HepG2 (cell line): ENCODE measurements at regions of chr3 and their contacts with region 1.

Region 1: DNA sequence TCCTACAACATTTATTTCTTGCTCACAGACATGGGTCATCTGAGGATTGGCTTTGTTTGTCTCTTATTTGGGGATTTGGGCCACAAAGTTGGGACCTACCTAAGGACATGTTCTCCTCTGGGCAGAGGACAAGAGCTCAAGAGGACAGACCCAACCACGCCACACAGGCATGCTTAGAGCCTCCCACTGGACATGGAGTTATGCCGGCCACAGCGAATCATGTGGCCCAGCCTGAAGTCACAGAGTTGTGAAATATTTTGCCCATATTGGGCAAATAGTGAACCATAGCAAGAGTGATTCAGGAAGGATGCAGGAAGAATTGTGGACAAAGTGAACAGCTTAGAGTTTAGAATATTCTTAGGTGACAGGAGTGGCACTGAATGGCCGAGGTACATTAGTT is 9.9 kb downstream of the TRAK1 start:
- DNase-seq: peak; percentile 51
- ATAC-seq: peak; percentile 39
- H3K4me3 ChIP-seq: no peak overlapping the region
- H3K27ac ChIP-seq: peak overlapping the region; percentile 3
- H3K4me1 ChIP-seq: peaks cover 29% of the 10 kb centered on the region
- H3K27me3 ChIP-seq: no peaks in the 10 kb centered on the region
- CTCF ChIP-seq: no peak
- EP300 ChIP-seq: no peak
- POLR2A ChIP-seq: no peak
- RAD21 ChIP-seq: no peak

Region 2: DNA sequence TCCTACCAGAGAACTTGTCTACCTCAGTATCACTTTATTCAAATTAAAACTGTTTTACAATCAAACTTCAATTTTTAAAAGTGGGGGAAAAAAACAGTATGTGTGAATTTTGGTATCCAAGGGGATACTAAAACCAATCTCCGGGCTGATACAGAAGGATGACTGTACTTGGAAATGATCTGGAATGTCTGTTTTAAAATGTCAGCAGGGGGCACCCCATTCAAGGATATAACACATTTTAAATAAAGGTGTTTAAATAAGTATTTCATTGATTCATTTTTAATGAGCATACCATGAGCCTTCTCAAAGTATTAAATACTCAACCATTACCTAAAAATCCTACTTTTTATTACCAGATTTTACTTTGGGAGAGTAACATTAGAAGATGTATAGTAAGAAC is 207.1 kb before region 1 on chr3:
- CTCF ChIA-PET with region 1: interaction called, 24 read pairs
- POLR2A ChIA-PET with region 1: no interaction called
- in situ Hi-C with region 1: loop called (anchors 5 kb)
- intact Hi-C with region 1: loop called (anchors 1 kb)
- DNase-seq: peak; percentile 30
- ATAC-seq: no peak
- H3K4me3 ChIP-seq: no peak overlapping the region
- H3K27ac ChIP-seq: no peak overlapping the region
- H3K4me1 ChIP-seq: peaks cover 12% of the 10 kb centered on the region
- H3K27me3 ChIP-seq: no peaks in the 10 kb centered on the region
- CTCF ChIP-seq: peak; percentile 62
- EP300 ChIP-seq: no peak
- POLR2A ChIP-seq: no peak
- RAD21 ChIP-seq: 0 out of 2 replicates have a peak, but pooled peaks have one; percentile 25

Region 3: GRCh38 chr3:41961750-41962679 is 139.0 kb before region 1 on chr3 and contains the start of gene ULK4:
- CTCF ChIA-PET with region 1: no interaction called
- POLR2A ChIA-PET with region 1: interaction called, 4 read pairs
- in situ Hi-C with region 1: no loop called
- intact Hi-C with region 1: loop called (anchors 1 kb)
- DNase-seq: peak; percentile 98
- ATAC-seq: peak; percentile 93
- H3K4me3 ChIP-seq: peak within 1 kb of the TSS; percentile 70 to 88 (median 87)
- H3K27ac ChIP-seq: peak within 1 kb of the TSS; percentile 75
- H3K4me1 ChIP-seq: peaks cover 16% of the 10 kb centered on the region
- H3K27me3 ChIP-seq: peaks cover 0 to 10% of the 10 kb centered on the region in 2 experiments; a peak in 2 of 5 replicates
- CTCF ChIP-seq: no peak
- EP300 ChIP-seq: peak in 1 of 2 experiments; percentile 34; a peak in 1 of 4 replicates
- POLR2A ChIP-seq: peak; percentile 63 to 72
- RAD21 ChIP-seq: peak; percentile 23; the same call in 1 of the 2 replicates
- total RNA-seq, gene ULK4: 9.0 and 11.8 TPM in 2 replicates

Region 4: DNA sequence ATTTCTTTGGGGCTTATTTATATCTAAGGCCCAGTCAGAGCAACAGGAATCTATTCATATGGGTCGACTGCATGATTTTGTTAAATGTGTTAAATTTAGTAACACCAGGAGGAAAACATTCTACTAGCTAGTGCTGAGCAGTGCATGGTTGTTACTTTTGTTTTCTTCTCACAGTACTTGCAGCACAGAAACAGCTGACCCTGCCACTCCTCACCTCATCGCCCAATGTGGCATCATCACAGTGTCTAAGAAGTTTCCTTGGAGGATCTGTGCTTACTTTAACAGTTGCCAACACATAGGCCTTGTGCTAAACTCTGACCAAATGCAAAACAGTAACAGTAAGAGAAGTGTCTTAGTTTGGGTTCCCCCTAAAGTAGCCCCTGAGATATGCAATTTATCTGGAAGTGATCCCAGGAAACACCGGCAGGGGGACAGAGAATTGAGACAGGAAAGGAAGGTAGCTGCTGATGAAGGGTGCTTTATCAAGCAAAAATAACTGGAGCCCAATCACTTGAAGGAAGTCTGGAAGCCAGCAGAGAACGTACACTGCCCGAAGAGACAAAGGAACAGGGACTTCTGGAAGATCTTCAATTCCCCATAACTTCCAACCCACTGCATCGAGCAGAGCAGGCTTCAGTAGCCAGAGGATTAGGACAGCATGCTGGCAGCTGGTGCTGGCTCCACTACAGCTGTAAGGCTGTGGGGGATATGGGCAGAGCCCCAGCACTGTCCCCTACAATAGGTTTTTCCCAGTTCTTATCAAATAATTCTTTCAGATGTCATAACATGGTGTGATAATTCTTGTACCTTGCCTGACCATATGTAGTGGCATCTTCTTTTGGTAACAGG is 103.1 kb before region 1 on chr3:
- CTCF ChIA-PET with region 1: interaction called, 9 read pairs
- POLR2A ChIA-PET with region 1: no interaction called
- in situ Hi-C with region 1: no loop called
- intact Hi-C with region 1: loop called (anchors 5 kb)
- DNase-seq: no peak
- ATAC-seq: peak; percentile 77
- H3K4me3 ChIP-seq: no peak overlapping the region
- H3K27ac ChIP-seq: no peak overlapping the region
- H3K4me1 ChIP-seq: peaks cover 12% of the 10 kb centered on the region
- H3K27me3 ChIP-seq: no peaks in the 10 kb centered on the region
- CTCF ChIP-seq: peak; percentile 34; the same call in 1 of the 2 replicates
- EP300 ChIP-seq: no peak
- POLR2A ChIP-seq: no peak
- RAD21 ChIP-seq: no peak

Region 5: DNA sequence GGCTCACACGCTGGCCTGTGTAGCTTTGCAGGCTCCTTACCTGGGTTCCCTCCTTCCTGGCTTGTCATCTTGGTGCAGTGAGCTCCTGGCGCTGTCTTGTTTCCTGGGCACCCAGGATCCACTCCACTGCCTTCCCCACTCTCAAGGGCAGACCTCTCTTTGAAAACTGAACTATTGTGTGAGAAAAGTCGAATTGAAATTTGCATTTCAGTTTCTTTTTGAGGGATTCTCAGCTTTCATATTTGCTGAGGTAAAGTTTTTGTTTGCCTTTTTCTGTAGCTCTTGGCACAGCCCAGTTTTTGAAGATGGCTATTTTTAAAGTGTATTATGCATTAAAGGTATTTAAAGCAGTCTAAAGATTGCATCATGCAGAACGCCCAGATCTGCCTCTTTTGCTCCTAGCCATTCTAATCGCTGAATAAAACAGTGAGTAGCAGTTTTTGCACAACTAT is 94.9 kb after region 1 on chr3:
- CTCF ChIA-PET with region 1: no interaction called
- POLR2A ChIA-PET with region 1: no interaction called
- in situ Hi-C with region 1: no loop called
- intact Hi-C with region 1: no loop called
- DNase-seq: no peak
- ATAC-seq: no peak
- H3K4me3 ChIP-seq: no peak overlapping the region
- H3K27ac ChIP-seq: no peak overlapping the region
- H3K4me1 ChIP-seq: no peaks in the 10 kb centered on the region
- H3K27me3 ChIP-seq: no peaks in the 10 kb centered on the region
- CTCF ChIP-seq: no peak
- EP300 ChIP-seq: no peak
- POLR2A ChIP-seq: no peak
- RAD21 ChIP-seq: no peak